Activated naive CD8-positive, alpha-beta T cell treated with anti-CD3 and anti-CD28 coated beads, Interleukin-2, amount 10 ng/mL, durations not matched to agents 7 days and 5 days (primary cell): ENCODE measurements at regions of chr14 and their contacts with region 1.

Region 1: GRCh38 chr14:23555882-23556699 is at the start of gene THTPA:
- DNase-seq: peak; percentile 90
- ATAC-seq: peak; percentile 81
- H3K4me3 Mint-ChIP-seq: peak within 1 kb of the TSS; percentile 95
- H3K27ac Mint-ChIP-seq: peak within 1 kb of the TSS; percentile 96
- H3K4me1 Mint-ChIP-seq: peaks cover 32% of the 10 kb centered on the region
- H3K27me3 Mint-ChIP-seq: no peaks in the 10 kb centered on the region
- total RNA-seq, gene THTPA: 14.2 to 19.2 TPM

Region 2: GRCh38 chr14:23478111-23478759 is 77.9 kb before region 1 on chr14:
- POLR2A ChIA-PET with region 1: interaction called, 11 read pairs
- DNase-seq: peak; percentile 53
- ATAC-seq: peak; percentile 60
- H3K4me3 Mint-ChIP-seq: no peak overlapping the region
- H3K27ac Mint-ChIP-seq: no peak overlapping the region
- H3K4me1 Mint-ChIP-seq: peaks cover 3% of the 10 kb centered on the region
- H3K27me3 Mint-ChIP-seq: no peaks in the 10 kb centered on the region

Region 3: GRCh38 chr14:23494223-23494622 is 61.9 kb before region 1 on chr14:
- POLR2A ChIA-PET with region 1: no interaction called
- DNase-seq: no peak
- ATAC-seq: no peak
- H3K4me3 Mint-ChIP-seq: no peak overlapping the region
- H3K27ac Mint-ChIP-seq: no peak overlapping the region
- H3K4me1 Mint-ChIP-seq: no peaks in the 10 kb centered on the region
- H3K27me3 Mint-ChIP-seq: no peaks in the 10 kb centered on the region

Region 4: GRCh38 chr14:23539248-23540140 is 16.6 kb before region 1 on chr14:
- POLR2A ChIA-PET with region 1: no interaction called
- DNase-seq: no peak
- ATAC-seq: peak; percentile 61
- H3K4me3 Mint-ChIP-seq: no peak overlapping the region
- H3K27ac Mint-ChIP-seq: no peak overlapping the region
- H3K4me1 Mint-ChIP-seq: peaks cover 5% of the 10 kb centered on the region
- H3K27me3 Mint-ChIP-seq: peaks cover 8% of the 10 kb centered on the region

Region 5: GRCh38 chr14:23567192-23568020 is 11.3 kb after region 1 on chr14 and contains the start of gene AP1G2:
- POLR2A ChIA-PET with region 1: interaction called, 15 read pairs
- DNase-seq: peak; percentile 88
- ATAC-seq: peak; percentile 96
- H3K4me3 Mint-ChIP-seq: peak within 1 kb of the TSS; percentile 100
- H3K27ac Mint-ChIP-seq: peak within 1 kb of the TSS; percentile 99
- H3K4me1 Mint-ChIP-seq: peaks cover 30% of the 10 kb centered on the region
- H3K27me3 Mint-ChIP-seq: peaks cover 2% of the 10 kb centered on the region
- total RNA-seq, gene AP1G2: 335 to 389 TPM